GM12878 (cell line): ENCODE measurements at regions of chr21 and their contacts with region 1.

Region 1: DNA sequence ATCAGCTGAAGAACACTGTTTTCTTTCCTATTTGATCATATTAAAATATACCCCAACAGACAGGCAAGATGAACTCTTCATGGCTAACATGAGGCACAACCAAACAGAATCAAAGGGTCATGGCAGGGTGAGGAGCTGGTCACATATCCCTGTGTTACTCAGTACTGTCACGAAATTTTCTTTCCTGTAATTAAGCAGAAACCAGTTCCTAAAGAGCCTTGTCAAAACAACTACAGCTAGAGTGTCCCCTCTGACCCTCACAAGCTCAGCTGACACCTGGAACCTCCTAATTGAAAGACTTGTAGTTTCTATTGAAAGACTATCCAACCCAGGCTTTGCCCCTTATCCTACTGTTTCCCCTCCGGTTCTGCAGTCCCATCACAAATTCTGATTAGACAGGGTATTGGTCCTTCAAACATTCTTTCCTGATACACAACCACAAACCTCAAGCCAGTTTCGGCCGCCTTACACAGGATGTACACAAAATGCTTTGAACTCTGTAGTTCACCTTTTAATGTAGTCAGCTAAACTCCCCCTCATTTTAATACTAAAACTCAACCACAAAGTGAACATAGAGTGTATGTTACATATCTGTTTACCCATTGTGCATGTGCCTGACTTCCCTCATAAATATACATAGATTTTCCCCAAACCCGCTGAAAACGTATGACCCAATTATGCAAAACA is 651.9 kb downstream of the MRPL39 start:
- DNase-seq: peak; percentile 82
- ATAC-seq: peak; percentile 92
- H3K4me3 ChIP-seq: no peak overlapping the region
- H3K27ac ChIP-seq: no peak overlapping the region
- H3K4me1 ChIP-seq: no peaks in the 10 kb centered on the region; the same call in 1 of the 2 replicates
- H3K27me3 ChIP-seq: no peaks in the 10 kb centered on the region
- CTCF ChIP-seq: no peak
- EP300 ChIP-seq: 0 out of 4 replicates have a peak, but pooled peaks of 1 of the 2 experiments have one; percentile 33
- POLR2A ChIP-seq: no peak
- RAD21 ChIP-seq: no peak

Region 2: GRCh38 chr21:24969068-24969467 is 13.7 kb after region 1 on chr21:
- CTCF ChIA-PET with region 1: no interaction called
- POLR2A ChIA-PET with region 1: no interaction called
- RAD21 ChIA-PET with region 1: no interaction called
- SMC1A ChIA-PET with region 1: interaction called, 14 read pairs
- in situ Hi-C with region 1: no loop called
- intact Hi-C with region 1: no loop called
- DNase-seq: no peak
- ATAC-seq: 0 out of 3 replicates have a peak, but pooled peaks have one; percentile 18
- H3K4me3 ChIP-seq: no peak overlapping the region
- H3K27ac ChIP-seq: no peak overlapping the region
- H3K4me1 ChIP-seq: no peaks in the 10 kb centered on the region
- H3K27me3 ChIP-seq: no peaks in the 10 kb centered on the region
- CTCF ChIP-seq: no peak
- EP300 ChIP-seq: no peak
- POLR2A ChIP-seq: no peak
- RAD21 ChIP-seq: no peak

Region 3: DNA sequence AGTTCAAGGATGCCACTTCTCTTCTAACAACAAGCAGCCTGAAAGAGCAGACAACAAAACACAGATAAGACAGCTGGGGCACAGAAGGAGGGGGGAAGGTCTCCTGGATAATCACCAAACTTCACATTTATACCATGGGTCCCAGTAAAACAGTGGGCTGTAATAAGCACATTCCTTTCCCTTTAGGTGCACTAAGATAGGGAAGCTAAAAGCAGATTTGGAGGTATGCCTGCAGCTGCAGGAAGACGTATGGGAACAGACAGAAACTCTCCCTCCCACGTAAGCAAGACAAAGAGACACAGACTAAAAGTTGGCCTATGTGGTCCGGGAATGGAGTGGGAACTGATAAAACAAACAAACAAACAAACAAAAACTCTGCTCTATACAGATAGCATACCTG is 39.8 kb after region 1 on chr21:
- CTCF ChIA-PET with region 1: no interaction called
- POLR2A ChIA-PET with region 1: no interaction called
- RAD21 ChIA-PET with region 1: interaction called, 6 read pairs
- SMC1A ChIA-PET with region 1: interaction called, 5 read pairs
- in situ Hi-C with region 1: no loop called
- intact Hi-C with region 1: loop called (anchors 2 kb)
- DNase-seq: no peak
- ATAC-seq: peak; percentile 36
- H3K4me3 ChIP-seq: no peak overlapping the region
- H3K27ac ChIP-seq: no peak overlapping the region; the same call in 1 of the 2 replicates
- H3K4me1 ChIP-seq: no peaks in the 10 kb centered on the region; the same call in 1 of the 2 replicates
- H3K27me3 ChIP-seq: no peaks in the 10 kb centered on the region
- CTCF ChIP-seq: no peak
- EP300 ChIP-seq: no peak
- POLR2A ChIP-seq: no peak
- RAD21 ChIP-seq: no peak